Right lobe of liver (tissue), 6 donors: ENCODE measurements at regions of chr1 and their contacts with region 1.

Region 1: DNA sequence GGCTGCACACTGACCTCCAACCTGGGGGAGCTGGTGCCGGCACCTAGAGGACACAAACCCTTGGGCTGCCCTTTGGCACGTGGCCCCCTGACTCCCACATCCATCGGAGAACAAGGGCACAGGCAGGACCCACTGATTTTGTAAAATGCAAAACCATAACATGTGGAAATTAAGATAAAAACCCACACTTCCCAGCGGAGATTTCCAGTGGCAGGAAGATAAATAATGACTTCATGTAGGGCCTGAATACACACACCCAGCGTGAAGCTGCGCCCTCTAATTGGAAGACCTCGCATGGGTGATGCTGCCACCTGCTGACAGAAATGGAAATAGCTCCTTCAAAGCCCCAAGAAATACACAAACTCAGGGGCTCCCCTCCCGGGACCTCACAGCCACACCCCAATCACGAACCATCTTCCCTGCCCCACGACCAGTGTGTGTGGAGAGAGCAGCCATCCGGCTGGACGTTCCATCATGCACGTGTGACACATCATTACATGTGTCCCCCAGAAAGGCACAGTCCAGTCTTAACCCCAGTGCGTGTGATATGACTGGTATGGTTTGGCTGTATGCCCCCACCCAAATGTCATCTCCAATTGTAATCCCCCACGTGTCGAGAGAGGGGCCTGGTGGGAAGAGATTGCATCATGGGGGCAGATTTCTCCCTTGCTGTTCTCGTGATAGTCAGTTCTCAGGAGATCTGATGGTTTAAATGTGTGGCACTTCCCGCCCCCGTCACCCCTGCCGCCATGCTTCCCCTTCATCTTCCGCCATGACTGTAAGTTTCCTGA is 5.7 kb upstream of the TPRG1L start:
- DNase-seq: peak in 2 of 3 donors; percentile 59 to 72
- ATAC-seq: peak; percentile 83 to 93 (median 90)
- H3K4me3 ChIP-seq: no peak overlapping the region
- H3K27ac ChIP-seq: no peak overlapping the region
- H3K4me1 ChIP-seq: peaks cover 0 to 16% (median 0%) of the 10 kb centered on the region in 4 donors
- H3K27me3 ChIP-seq: no peaks in the 10 kb centered on the region
- CTCF ChIP-seq: peak; percentile 71 to 92 (median 87)
- POLR2A ChIP-seq: no peak

Region 2: DNA sequence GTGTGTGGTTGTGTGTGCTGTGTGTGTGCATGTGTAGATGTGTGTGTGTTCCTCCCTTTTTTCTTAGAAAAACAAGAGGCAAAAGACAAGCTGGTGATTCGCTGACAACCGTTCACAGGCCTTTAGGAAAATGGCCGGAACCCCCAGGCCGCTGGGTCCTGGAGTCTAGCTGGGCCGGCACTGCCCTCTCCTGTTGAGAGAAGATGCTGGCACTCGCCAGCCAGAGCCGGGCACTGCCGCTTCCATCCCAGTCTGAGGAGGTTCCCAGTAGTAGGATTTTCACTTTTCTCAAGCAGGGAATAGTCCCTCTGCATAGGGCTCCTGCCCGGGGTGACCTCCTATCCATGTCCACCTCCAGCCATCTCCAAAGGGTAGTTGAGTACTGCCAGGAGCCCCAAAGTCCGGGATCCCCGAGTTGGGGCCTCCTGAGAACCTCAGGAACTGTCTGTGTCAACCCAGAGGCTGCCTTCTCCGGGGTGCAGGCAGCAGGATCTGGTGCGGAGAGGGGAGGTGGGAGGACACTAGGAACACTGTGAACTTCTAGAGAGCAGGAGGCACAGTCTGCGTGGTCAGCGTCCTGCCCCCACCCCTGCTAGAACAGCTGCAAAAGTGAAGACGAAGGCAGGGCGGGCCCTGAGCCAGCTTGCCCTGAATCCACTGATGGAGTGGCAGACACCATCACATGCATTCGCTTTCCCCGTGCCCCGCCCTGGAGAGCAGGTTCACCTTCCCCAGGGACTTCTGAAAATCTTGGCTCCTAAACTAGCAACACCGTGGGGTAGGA is 208.7 kb before region 1 on chr1:
- intact Hi-C with region 1: no loop called
- DNase-seq: peak in 1 of 3 donors; percentile 44
- ATAC-seq: peak; percentile 28 to 71 (median 49)
- H3K4me3 ChIP-seq: no peak overlapping the region
- H3K27ac ChIP-seq: no peak overlapping the region
- H3K4me1 ChIP-seq: no peaks in the 10 kb centered on the region
- H3K27me3 ChIP-seq: no peaks in the 10 kb centered on the region
- CTCF ChIP-seq: peak; percentile 27 to 46 (median 40)
- POLR2A ChIP-seq: no peak

Region 3: DNA sequence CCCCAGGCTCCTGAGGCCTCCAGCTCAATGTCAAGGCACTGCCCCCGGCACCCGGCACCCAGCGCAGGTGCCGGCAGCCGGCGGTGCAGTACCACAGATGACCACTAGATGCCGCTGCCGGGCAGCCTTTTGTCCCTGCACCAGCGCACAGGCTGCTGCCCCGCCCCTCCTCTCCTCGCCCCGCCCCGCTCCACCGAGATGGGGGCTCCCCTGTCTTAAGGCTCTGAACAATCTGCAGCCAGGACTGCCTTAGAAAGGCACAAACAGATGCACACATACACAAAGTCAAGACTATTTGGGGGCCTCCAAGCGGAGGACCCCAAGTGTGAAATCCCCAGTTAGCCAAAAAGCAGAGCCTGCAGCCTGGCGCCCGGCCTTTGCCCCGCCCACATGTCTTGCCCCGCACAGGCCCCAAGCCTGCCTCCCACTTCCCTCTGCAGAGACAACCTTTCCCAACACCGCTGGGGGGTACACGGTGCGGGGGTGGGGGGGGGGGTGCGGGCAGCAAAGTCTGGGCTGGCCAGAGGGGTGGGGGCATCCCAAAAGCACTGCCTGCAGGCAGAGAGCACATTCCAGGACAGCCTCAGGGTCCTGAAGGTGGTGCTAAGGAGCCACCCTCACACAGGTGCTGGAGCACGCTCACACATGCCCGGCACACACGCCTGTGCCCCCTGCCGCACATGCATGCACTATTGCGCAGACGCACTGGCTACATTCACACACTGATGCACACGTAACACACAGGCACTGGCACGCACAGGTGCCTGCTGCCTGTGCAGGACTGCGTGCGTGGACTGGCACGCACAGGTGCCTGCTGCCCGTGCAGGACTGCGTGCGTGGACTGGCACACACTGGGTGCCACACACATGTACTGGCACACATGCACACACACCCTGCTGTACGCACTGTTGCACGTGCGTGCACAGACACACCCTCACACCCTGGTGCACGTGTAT is 127.5 kb before region 1 on chr1:
- intact Hi-C with region 1: loop called (anchors 5 kb)
- DNase-seq: peak; percentile 77 to 81 (median 77)
- ATAC-seq: peak; percentile 84 to 96 (median 94)
- H3K4me3 ChIP-seq: no peak overlapping the region
- H3K27ac ChIP-seq: no peak overlapping the region
- H3K4me1 ChIP-seq: no peaks in the 10 kb centered on the region
- H3K27me3 ChIP-seq: no peaks in the 10 kb centered on the region
- CTCF ChIP-seq: peak; percentile 96 to 100 (median 100)
- POLR2A ChIP-seq: no peak